ENCODE measurements at regions of chr16 and their contacts with region 1.

Region 1: DNA sequence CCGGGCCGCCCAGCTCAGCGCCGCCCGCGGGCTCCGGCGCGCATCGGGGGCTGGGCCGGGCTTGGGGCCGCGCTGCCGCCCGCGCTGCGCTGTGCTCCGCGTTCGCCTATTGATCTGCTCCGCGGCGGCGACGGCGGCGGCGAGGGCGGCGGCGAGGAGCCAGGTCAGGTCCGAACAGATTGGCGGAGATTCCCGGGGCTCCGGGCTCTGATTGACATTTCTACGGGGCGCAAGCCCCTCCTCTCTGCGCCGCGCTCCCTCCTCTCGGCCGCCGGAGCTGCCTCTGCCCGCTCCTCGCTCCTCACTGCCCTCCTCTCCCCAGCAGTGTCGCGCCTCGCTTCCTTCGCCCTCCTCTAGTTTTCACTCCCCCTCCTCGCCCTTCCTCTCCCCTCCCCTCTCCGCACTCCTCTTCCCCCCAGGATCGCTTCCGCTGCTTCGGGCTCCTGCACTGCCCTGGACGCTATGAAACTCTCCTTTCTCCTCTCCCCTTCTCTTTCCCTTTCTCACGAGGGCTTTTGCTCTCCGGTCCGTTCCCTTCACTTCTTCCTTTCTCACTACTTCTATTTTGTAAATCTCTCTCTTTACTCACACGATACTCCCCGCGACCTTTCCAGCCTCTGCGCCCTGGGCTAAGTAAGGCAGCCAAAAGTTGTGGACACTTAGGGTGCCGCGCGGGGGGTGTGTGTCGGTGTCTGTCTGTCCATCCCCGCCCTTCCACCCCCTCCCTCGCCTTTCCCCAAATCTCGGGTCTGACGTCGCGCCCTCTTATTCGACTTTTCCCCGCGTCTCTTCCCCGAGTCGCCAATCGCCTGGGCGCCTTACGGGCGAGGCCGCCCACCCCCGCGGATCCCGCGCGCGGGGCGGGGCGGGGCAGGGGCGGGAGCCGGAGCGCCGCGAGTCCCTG is at the start of gene IRX3:
- DNase-seq: peak; percentile 88 to 92
- H3K4me3 ChIP-seq: peak within 1 kb of the TSS; percentile 61
- H3K4me1 ChIP-seq: no peaks in the 10 kb centered on the region
- H3K27me3 ChIP-seq: no peaks in the 10 kb centered on the region

Region 2: GRCh38 chr16:53773150-53773846 is 513.0 kb before region 1 on chr16:
- in situ Hi-C with region 1: loop called (anchors 25 kb)
- DNase-seq: peak; percentile 60 to 82
- H3K4me3 ChIP-seq: no peak overlapping the region
- H3K4me1 ChIP-seq: peaks cover 39% of the 10 kb centered on the region
- H3K27me3 ChIP-seq: no peaks in the 10 kb centered on the region

Region 3: DNA sequence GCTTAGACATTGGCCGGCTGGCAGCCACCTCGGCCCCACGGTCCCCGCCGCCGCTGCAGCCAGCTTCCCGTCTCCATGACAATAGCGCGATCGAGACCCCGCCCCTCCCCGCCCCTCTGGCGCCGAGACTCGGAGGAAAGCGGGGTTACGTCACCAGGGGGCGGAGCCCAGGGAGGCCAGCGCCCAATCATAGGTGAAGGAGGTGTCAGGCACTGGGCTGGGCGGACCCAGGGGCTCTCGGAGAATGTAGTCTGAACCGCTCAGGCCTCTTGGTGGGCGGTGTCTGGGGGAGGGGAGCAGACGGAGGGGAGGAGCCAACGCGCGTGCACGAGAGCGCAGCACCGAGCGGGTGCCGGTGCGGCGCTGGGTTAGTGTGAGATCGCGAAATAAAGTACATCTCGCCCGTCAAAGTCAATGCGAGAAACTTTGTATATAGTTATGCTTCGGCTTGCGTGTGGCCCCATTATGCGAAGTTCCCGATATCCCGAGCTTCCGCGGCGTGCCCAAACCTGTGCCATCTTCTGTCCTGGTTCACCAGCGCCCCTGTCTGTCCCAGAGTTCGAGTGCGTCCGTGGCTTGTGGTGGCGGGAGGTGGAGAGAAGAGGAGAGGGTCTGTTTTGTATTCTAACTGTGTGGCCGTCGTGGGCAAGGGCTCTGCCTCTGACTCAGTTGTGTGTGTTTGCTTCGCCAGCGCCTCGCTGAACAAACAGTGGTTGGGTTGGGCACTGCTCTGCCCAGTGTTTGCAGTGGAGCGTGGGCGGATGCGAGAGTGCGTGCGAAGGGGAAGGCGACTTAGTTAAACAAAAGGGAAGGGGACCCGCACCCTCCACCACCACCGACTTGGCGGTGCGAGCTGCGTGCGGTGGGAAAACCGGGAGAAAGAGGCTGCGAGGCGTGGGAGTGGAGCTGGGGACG is 643.0 kb after region 1 on chr16:
- in situ Hi-C with region 1: loop called (anchors 10 kb)
- DNase-seq: peak; percentile 95 to 100
- H3K4me3 ChIP-seq: peak overlapping the region; percentile 66
- H3K4me1 ChIP-seq: peaks cover 12% of the 10 kb centered on the region
- H3K27me3 ChIP-seq: no peaks in the 10 kb centered on the region

Region 4: GRCh38 chr16:55257966-55258613 is 971.7 kb after region 1 on chr16:
- in situ Hi-C with region 1: loop called (anchors 25 kb)
- DNase-seq: peak; percentile 60 to 83
- H3K4me3 ChIP-seq: no peak overlapping the region
- H3K4me1 ChIP-seq: no peaks in the 10 kb centered on the region
- H3K27me3 ChIP-seq: no peaks in the 10 kb centered on the region

Measured in HAP-1 (cell line).